Activated T-helper 2 cell treated with anti-CD3 and anti-CD28 coated beads, Interferon-gamma antibody, Interleukin-2, Interleukin-4, amounts not matched to agents 10 μg/mL and 5 μg/mL and 100 μg/mL, durations not matched to agents 14 hours and 24 hours and 36 hours (primary cell): ENCODE measurements at regions of chr10 and their contacts with region 1.

Region 1: GRCh38 chr10:114845978-114846693 is 24.6 kb downstream of the FHIP2A start:
- DNase-seq: no peak
- H3K4me3 Mint-ChIP-seq: no peak overlapping the region
- H3K27ac Mint-ChIP-seq: no peak overlapping the region
- H3K4me1 Mint-ChIP-seq: peaks cover 17% of the 10 kb centered on the region
- H3K27me3 Mint-ChIP-seq: no peaks in the 10 kb centered on the region

Region 2: GRCh38 chr10:114767101-114767985 is 78.8 kb before region 1 on chr10:
- intact Hi-C with region 1: no loop called
- DNase-seq: no peak
- H3K4me3 Mint-ChIP-seq: peak overlapping the region; percentile 74
- H3K27ac Mint-ChIP-seq: no peak overlapping the region
- H3K4me1 Mint-ChIP-seq: peaks cover 5% of the 10 kb centered on the region
- H3K27me3 Mint-ChIP-seq: peaks cover 43% of the 10 kb centered on the region

Region 3: GRCh38 chr10:114829160-114829909 is 16.8 kb before region 1 on chr10:
- intact Hi-C with region 1: loop called (anchors 2 kb)
- DNase-seq: no peak
- H3K4me3 Mint-ChIP-seq: no peak overlapping the region
- H3K27ac Mint-ChIP-seq: no peak overlapping the region
- H3K4me1 Mint-ChIP-seq: peaks cover 35% of the 10 kb centered on the region
- H3K27me3 Mint-ChIP-seq: no peaks in the 10 kb centered on the region

Region 4: GRCh38 chr10:114940735-114941134 is 94.6 kb after region 1 on chr10:
- intact Hi-C with region 1: no loop called
- DNase-seq: no peak
- H3K4me3 Mint-ChIP-seq: no peak overlapping the region
- H3K27ac Mint-ChIP-seq: peak overlapping the region; percentile 29
- H3K4me1 Mint-ChIP-seq: peaks cover 18% of the 10 kb centered on the region
- H3K27me3 Mint-ChIP-seq: no peaks in the 10 kb centered on the region

Region 5: DNA sequence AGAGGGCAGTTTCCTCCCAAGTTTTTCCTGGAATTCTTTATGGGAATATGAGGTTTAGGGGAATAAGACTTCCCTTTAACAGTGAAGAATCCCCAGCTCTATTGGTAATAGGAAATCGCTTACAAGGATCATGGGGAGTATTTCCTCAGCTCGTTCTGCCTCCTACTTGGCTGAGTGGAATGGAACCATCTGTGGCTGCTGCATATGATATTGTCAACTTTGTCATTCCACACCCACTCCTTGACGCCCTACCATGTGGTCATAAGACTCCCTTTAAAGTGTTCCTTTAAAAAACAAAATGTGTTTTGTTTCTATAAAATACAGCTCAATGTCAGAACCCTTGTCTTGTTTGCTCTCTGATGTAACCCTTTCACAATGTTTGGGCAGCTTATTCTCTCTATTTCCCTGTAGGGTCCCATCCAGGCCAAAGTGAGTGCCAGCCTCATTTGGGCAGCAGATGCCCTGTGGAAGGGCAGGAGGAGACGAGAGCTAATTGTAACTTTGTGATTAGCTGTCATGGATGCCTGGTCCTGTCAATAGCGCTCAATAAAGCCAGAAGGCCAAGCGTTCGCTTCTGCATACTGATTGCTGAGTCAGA is 213.3 kb after region 1 on chr10:
- intact Hi-C with region 1: no loop called
- DNase-seq: no peak
- H3K4me3 Mint-ChIP-seq: no peak overlapping the region
- H3K27ac Mint-ChIP-seq: no peak overlapping the region
- H3K4me1 Mint-ChIP-seq: no peaks in the 10 kb centered on the region
- H3K27me3 Mint-ChIP-seq: peaks cover 14% of the 10 kb centered on the region

Region 6: GRCh38 chr10:115092555-115093285 is 246.6 kb after region 1 on chr10:
- intact Hi-C with region 1: no loop called
- DNase-seq: peak; percentile 21
- H3K4me3 Mint-ChIP-seq: peak overlapping the region; percentile 74
- H3K27ac Mint-ChIP-seq: no peak overlapping the region
- H3K4me1 Mint-ChIP-seq: peaks cover 9% of the 10 kb centered on the region
- H3K27me3 Mint-ChIP-seq: peaks cover 53% of the 10 kb centered on the region